ENCODE measurements at regions of chr3 and their contacts with region 1.

Region 1: DNA sequence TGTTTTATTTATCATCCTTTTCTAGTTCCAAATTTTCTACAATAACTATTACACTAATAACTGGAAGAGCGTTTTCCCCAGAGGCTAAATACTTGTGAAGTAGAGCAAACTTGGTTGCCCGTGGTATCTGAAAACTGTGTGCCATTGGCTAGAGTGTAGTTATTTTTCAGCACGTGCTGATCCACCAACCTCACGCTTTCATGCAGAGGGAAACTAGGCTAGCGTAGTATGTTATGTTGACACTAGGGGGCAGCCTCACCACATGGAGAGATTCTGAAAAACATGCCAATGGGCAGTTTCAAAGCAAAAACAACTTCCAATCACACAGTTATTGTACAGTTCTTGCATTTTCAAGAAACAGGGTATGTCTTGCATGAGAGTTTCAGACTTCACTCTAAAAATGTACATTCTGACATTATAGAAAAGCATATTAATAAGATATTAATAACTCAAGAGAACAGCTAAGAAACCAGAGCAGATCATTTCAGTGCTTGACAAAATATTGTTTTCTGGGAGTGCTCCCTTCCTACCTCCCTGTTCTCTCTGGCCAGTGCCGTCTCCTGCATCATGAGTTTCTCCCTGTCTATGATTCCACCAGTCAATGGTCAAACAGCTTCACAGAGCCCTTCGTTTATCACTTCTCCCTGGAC is 39.7 kb downstream of the SPATA12 start:
- DNase-seq: peak; percentile 80
- ATAC-seq: peak; percentile 93
- H3K4me3 Mint-ChIP-seq: no peak overlapping the region
- H3K27ac Mint-ChIP-seq: no peak overlapping the region
- H3K4me1 Mint-ChIP-seq: no peaks in the 10 kb centered on the region
- H3K27me3 Mint-ChIP-seq: no peaks in the 10 kb centered on the region
- CTCF ChIP-seq: peak; percentile 88

Region 2: GRCh38 chr3:56997675-56998074 is 102.5 kb before region 1 on chr3:
- CTCF ChIA-PET with region 1: interaction called, 10 read pairs
- POLR2A ChIA-PET with region 1: no interaction called
- intact Hi-C with region 1: no loop called
- DNase-seq: no peak
- ATAC-seq: no peak
- H3K4me3 Mint-ChIP-seq: no peak overlapping the region
- H3K27ac Mint-ChIP-seq: no peak overlapping the region
- H3K4me1 Mint-ChIP-seq: no peaks in the 10 kb centered on the region
- H3K27me3 Mint-ChIP-seq: no peaks in the 10 kb centered on the region
- CTCF ChIP-seq: no peak

Region 3: GRCh38 chr3:57112206-57112605 is 12.0 kb after region 1 on chr3:
- CTCF ChIA-PET with region 1: interaction called, 21 read pairs
- POLR2A ChIA-PET with region 1: interaction called, 4 read pairs
- intact Hi-C with region 1: no loop called
- DNase-seq: peak; percentile 13
- ATAC-seq: no peak
- H3K4me3 Mint-ChIP-seq: no peak overlapping the region
- H3K27ac Mint-ChIP-seq: no peak overlapping the region
- H3K4me1 Mint-ChIP-seq: peaks cover 2% of the 10 kb centered on the region
- H3K27me3 Mint-ChIP-seq: no peaks in the 10 kb centered on the region
- CTCF ChIP-seq: no peak

Region 4: GRCh38 chr3:57147068-57147467 is 46.9 kb after region 1 on chr3:
- CTCF ChIA-PET with region 1: interaction called, 11 read pairs
- POLR2A ChIA-PET with region 1: no interaction called
- intact Hi-C with region 1: no loop called
- DNase-seq: no peak
- ATAC-seq: no peak
- H3K4me3 Mint-ChIP-seq: no peak overlapping the region
- H3K27ac Mint-ChIP-seq: no peak overlapping the region
- H3K4me1 Mint-ChIP-seq: no peaks in the 10 kb centered on the region
- H3K27me3 Mint-ChIP-seq: peaks cover 8% of the 10 kb centered on the region
- CTCF ChIP-seq: no peak

Region 5: GRCh38 chr3:57158813-57159738 is 58.9 kb after region 1 on chr3:
- CTCF ChIA-PET with region 1: interaction called, 14 read pairs
- POLR2A ChIA-PET with region 1: no interaction called
- intact Hi-C with region 1: no loop called
- DNase-seq: peak; percentile 38
- ATAC-seq: peak; percentile 45
- H3K4me3 Mint-ChIP-seq: no peak overlapping the region
- H3K27ac Mint-ChIP-seq: no peak overlapping the region
- H3K4me1 Mint-ChIP-seq: peaks cover 12% of the 10 kb centered on the region
- H3K27me3 Mint-ChIP-seq: peaks cover 56% of the 10 kb centered on the region
- CTCF ChIP-seq: no peak

Region 6: DNA sequence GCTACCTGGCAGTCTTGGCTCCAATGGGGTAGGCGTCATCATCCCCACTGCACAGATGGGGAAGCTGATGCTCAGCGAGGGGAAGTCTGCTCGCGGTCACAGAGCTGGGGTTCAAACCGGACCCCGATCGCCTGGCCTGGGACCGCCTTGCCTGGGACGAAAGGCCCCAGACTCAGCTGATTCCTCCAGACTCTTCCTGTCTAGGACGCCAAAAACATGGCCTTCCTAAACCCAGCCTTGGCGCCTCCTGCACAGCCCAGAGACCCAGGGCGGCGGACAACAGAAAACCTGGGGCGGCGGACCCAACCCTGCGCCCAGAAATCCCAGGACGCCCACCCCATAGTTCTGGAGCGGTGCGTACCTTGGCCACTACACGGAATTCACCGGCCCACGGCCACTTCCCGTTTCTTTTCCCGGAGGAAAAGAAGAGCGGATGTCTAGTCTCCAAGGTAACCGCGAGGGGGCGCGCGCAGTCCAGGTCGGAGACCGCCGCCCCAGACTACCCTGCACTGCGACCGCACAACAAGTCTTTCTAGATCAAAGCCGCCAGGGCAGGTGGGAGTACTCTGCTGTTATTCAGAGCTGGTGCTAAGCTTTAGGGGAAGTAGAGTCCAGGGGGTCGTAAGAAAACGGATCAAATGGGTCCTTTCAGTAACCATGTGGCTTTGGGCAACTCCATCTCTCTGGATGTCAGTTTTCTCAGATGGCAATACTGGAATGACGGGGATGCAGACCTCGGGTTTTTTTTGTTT is 69.9 kb after region 1 on chr3:
- CTCF ChIA-PET with region 1: interaction called, 21 read pairs
- POLR2A ChIA-PET with region 1: no interaction called
- intact Hi-C with region 1: no loop called
- DNase-seq: peak; percentile 79
- ATAC-seq: peak; percentile 80
- H3K4me3 Mint-ChIP-seq: peak overlapping the region; percentile 58
- H3K27ac Mint-ChIP-seq: no peak overlapping the region
- H3K4me1 Mint-ChIP-seq: peaks cover 6% of the 10 kb centered on the region
- H3K27me3 Mint-ChIP-seq: peaks cover 45% of the 10 kb centered on the region
- CTCF ChIP-seq: peak; percentile 97